GM10248 (cell line): ENCODE measurements at regions of chr3 and their contacts with region 1.

Region 1: GRCh38 chr3:51974963-51975851 is at the start of gene ABHD14A:
- DNase-seq: peak; percentile 92
- CTCF ChIP-seq: no peak

Region 2: DNA sequence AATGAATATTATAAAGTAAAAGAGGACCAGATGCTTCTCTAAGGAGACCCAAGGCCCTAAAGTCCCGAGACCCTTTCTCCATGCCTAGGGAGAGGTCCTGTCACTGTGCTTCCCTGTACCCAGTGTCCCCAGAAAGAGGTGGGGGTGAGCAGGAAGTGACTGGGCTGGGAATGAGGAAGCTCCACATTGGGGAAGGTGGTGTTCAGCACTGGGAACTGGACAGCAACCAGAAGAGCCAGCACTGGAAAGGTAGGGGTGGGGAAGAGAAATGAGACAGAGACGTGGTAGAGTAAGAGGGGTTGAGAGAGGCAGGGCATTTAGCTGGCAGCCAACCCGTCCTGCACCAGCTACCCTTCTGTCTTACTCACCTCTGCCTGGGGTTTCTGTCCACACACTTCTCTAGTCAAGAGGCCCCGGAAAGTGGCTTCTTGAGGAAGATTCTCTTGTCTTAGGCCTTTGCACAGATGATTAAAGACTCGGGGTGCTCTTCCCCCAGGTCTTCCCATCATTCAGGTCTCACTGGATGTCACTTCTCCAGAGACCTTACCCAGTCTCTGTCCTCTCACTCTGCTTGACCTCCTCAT is 45.7 kb before region 1 on chr3:
- CTCF ChIA-PET with region 1: no interaction called
- POLR2A ChIA-PET with region 1: no interaction called
- DNase-seq: peak; percentile 20
- CTCF ChIP-seq: no peak

Region 3: GRCh38 chr3:51947215-51947991 is 27.8 kb before region 1 on chr3:
- CTCF ChIA-PET with region 1: interaction called, 42 read pairs
- POLR2A ChIA-PET with region 1: interaction called, 3 read pairs
- DNase-seq: no peak
- CTCF ChIP-seq: no peak

Region 4: DNA sequence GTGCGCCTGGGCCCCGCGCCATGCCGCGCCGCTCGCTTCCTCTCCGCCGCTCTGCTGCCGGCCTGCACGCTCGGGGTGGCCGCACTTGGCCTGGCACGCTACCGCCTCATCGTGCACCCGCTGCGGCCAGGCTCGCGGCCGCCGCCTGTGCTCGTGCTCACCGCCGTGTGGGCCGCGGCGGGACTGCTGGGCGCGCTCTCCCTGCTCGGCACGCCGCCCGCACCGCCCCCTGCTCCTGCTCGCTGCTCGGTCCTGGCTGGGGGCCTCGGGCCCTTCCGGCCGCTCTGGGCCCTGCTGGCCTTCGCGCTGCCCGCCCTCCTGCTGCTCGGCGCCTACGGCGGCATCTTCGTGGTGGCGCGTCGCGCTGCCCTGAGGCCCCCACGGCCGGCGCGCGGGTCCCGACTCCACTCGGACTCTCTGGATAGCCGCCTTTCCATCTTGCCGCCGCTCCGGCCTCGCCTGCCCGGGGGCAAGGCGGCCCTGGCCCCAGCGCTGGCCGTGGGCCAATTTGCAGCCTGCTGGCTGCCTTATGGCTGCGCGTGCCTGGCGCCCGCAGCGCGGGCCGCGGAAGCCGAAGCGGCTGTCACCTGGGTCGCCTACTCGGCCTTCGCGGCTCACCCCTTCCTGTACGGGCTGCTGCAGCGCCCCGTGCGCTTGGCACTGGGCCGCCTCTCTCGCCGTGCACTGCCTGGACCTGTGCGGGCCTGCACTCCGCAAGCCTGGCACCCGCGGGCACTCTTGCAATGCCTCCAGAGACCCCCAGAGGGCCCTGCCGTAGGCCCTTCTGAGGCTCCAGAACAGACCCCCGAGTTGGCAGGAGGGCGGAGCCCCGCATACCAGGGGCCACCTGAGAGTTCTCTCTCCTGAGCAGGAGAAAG is 19.1 kb before region 1 on chr3:
- CTCF ChIA-PET with region 1: interaction called, 43 read pairs
- POLR2A ChIA-PET with region 1: no interaction called
- DNase-seq: no peak
- CTCF ChIP-seq: peak; percentile 17

Region 5: DNA sequence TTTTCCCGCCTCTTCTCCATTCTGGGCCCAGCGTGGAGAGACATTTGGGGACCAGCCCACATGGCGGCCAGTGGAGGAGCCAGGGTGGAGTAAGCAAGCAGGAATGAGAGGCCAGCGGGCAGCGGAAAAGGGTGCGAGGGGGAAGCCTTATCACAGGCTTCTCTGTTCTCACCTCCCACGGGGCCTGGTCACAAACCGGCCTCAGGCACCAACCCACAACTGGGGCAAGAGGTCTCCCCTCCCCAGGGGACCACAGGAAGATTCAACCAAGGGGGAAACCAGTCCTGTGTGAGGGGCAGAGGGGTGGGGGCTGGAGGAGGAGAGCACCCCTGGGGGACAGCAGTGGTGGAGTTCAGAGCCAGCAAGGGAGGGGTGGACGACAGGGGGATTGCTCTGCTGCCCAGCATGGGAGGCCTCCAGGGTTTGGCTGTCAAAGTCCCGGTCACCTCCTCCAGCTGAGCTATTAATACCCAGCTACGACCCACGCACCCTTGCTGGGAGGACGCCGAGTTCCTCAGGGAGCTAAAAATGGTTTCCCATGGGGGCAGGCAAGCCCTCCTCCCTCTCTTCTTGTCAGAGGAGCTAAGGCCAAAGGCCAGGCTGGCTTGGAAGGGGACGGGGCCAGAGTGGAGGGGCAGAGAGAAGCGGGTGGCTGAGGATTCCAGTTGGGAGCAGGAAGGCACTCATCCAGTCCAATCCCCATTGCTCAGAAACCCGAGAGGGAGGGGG is 44.3 kb after region 1 on chr3:
- CTCF ChIA-PET with region 1: no interaction called
- POLR2A ChIA-PET with region 1: no interaction called
- DNase-seq: no peak
- CTCF ChIP-seq: no peak

Region 6: GRCh38 chr3:52181543-52181942 is 206.3 kb after region 1 on chr3:
- CTCF ChIA-PET with region 1: no interaction called
- POLR2A ChIA-PET with region 1: no interaction called
- DNase-seq: no peak
- CTCF ChIP-seq: no peak